ENCODE measurements at regions of chr3 and their contacts with region 1.

Region 1: DNA sequence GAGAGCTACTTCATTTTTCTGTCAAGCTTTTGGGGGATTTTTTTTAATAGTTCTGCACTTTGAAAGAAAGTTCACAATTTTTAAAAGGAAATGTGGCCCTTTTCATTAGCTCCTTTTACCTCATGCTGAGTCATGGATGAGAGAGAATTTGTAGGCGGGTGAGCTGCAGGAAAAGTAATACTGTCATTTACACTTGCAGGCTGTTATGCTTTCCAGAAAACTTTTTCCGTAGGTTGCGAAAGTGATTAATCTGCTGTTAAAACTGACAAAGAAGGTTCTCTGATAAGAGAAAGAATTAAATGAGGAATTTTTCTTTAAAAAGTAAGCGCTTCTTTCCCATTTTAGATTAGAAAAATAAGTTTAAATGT is 430.2 kb downstream of the LPP start:
- DNase-seq: peak; percentile 68
- ATAC-seq: peak; percentile 64
- H3K4me3 ChIP-seq: peak overlapping the region; percentile 39
- H3K27ac ChIP-seq: peak overlapping the region; percentile 88
- H3K4me1 ChIP-seq: peaks cover 29% of the 10 kb centered on the region
- H3K27me3 ChIP-seq: no peaks in the 10 kb centered on the region
- CTCF ChIP-seq: no peak

Region 2: GRCh38 chr3:188539631-188540194 is 44.4 kb before region 1 on chr3:
- CTCF ChIA-PET with region 1: no interaction called
- POLR2A ChIA-PET with region 1: no interaction called
- intact Hi-C with region 1: loop called (anchors 2 kb)
- DNase-seq: no peak
- ATAC-seq: no peak
- H3K4me3 ChIP-seq: no peak overlapping the region
- H3K27ac ChIP-seq: no peak overlapping the region
- H3K4me1 ChIP-seq: peaks cover 27% of the 10 kb centered on the region
- H3K27me3 ChIP-seq: no peaks in the 10 kb centered on the region
- CTCF ChIP-seq: no peak

Region 3: DNA sequence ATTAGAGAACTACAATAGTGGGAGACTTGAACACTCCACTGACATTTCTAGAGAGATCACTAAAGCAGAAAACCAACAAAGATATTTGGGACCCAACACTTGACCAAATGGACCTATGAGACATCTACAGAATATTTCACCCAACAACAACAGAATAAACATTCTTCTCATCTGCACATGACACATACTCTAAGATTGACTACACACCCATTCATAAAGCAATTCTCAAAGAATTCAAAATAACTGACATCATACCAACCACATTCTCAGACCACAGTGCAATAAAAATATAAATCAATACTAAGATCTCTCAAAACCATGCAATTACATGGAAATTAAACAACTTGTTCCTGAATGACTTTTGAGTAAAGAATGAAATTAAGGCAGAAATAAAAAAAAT is 43.5 kb after region 1 on chr3:
- CTCF ChIA-PET with region 1: no interaction called
- POLR2A ChIA-PET with region 1: no interaction called
- intact Hi-C with region 1: loop called (anchors 2 kb)
- DNase-seq: peak; percentile 91
- ATAC-seq: peak; percentile 91
- H3K4me3 ChIP-seq: 0 out of 2 replicates have a peak overlapping the region, but pooled peaks have one; percentile 5
- H3K27ac ChIP-seq: peak overlapping the region; percentile 88
- H3K4me1 ChIP-seq: peaks cover 41% of the 10 kb centered on the region
- H3K27me3 ChIP-seq: no peaks in the 10 kb centered on the region
- CTCF ChIP-seq: no peak